ENCODE measurements at regions of chr4 and their contacts with region 1.

Region 1: GRCh38 chr4:15729910-15730533 is 27.2 kb downstream of the BST1 start:
- DNase-seq: peak; percentile 52
- H3K4me3 Mint-ChIP-seq: no peak overlapping the region
- H3K27ac Mint-ChIP-seq: no peak overlapping the region
- H3K4me1 Mint-ChIP-seq: peaks cover 25% of the 10 kb centered on the region
- H3K27me3 Mint-ChIP-seq: no peaks in the 10 kb centered on the region

Region 2: GRCh38 chr4:15714646-15715435 is 15.2 kb before region 1 on chr4:
- CTCF ChIA-PET with region 1: no interaction called
- POLR2A ChIA-PET with region 1: no interaction called
- DNase-seq: no peak
- H3K4me3 Mint-ChIP-seq: no peak overlapping the region
- H3K27ac Mint-ChIP-seq: no peak overlapping the region
- H3K4me1 Mint-ChIP-seq: no peaks in the 10 kb centered on the region
- H3K27me3 Mint-ChIP-seq: no peaks in the 10 kb centered on the region

Region 3: DNA sequence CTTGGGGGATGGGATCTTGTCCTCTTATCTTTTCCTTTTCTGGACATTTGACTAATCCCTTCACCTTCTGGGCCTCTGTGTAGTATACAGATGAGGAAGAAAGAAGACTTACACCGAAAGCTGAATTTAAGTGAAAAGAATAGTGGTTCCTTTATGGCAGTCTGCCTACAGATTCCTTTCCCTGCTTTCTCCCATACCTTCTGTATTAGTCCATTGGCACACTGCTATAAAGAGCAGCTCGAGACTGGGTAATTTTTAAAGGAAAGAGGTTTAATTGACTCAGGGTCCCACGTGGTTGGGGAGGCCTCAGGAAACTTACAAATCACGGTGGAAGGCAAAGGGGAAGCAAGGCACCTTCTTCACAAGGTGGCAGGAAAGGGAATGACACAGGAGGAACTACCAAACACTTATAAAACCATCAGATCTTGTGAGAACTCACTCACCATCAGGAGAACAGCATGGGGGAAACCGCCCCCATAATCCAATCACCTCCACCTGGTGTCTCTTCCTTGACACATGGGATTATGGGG is 14.1 kb after region 1 on chr4:
- CTCF ChIA-PET with region 1: interaction called, 11 read pairs
- POLR2A ChIA-PET with region 1: no interaction called
- DNase-seq: no peak
- H3K4me3 Mint-ChIP-seq: no peak overlapping the region
- H3K27ac Mint-ChIP-seq: no peak overlapping the region
- H3K4me1 Mint-ChIP-seq: peaks cover 14% of the 10 kb centered on the region
- H3K27me3 Mint-ChIP-seq: no peaks in the 10 kb centered on the region

Measured in activated CD4-positive, alpha-beta T cell treated with anti-CD3 and anti-CD28 coated beads, Interleukin-2, amount 10 ng/mL, durations not matched to agents 7 days and 5 days (primary cell).